ENCODE measurements at regions of chr5 and their contacts with region 1.

Region 1: DNA sequence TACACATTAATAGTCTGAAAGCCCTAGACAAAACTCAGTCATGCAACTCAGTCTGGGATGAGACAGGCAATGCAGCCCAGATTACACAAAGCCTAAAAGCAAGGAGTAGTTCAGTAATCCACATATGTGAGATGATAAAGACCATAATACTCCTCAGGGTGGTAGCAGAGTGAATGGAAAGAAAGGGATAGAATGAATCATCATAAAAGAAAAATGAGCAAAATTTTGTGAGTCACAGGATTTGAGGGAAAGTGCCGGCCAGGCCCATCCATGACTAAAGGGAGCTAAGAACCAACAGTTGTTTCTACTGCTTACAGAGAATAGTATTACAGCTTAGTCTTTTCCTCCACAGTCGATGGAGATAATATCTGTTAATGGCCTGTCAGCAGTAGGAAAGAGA is 90.0 kb upstream of the POU5F2 start:
- DNase-seq: no peak

Region 2: GRCh38 chr5:93755716-93756115 is 75.7 kb before region 1 on chr5:
- intact Hi-C with region 1: loop called in 1 of 2 experiments (anchors 2 kb)
- DNase-seq: no peak

Region 3: DNA sequence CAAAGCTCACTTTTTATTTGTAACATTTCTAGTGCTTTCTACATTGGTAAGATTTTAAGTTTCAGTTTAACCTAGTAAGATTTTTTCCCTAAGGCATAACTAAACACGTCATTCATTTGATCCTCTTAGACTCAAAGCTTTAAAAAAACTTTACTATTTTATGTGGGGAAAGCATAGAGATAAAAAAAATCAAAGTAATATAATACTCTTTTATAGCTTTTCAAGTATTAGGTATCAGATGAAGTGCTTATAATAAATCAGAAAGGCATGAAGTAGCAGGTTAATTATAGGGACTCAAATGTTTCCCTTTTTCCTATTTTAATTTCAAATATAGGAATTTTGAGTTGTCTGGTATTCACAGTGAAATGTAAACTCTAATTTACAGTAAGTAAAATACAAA is 22.0 kb before region 1 on chr5:
- intact Hi-C with region 1: no loop called
- DNase-seq: no peak

Region 4: GRCh38 chr5:93915142-93915553 is 83.7 kb after region 1 on chr5:
- intact Hi-C with region 1: no loop called
- DNase-seq: no peak